Ovary (tissue), 10 donors: ENCODE measurements at regions of chr17 and their contacts with region 1.

Region 1: DNA sequence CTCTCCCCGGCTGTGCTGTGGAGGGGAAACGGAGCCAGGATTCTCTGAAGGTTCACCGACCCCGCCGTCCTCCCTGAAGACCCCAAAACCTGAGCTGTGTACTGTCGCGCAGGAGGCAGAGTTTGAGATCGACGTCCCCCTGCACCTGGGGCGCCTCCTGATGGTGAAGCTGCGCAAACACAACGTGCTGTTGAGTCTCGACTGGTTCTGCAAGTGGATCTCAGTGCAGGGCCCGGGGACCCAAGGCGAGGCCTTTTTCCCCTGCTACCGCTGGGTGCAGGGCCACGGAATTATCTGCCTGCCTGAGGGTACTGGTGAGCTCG is 62.6 kb upstream of the TEKT1 start:
- DNase-seq: no peak
- H3K4me3 ChIP-seq: no peak overlapping the region
- H3K27ac ChIP-seq: no peak overlapping the region
- H3K4me1 ChIP-seq: no peaks in the 10 kb centered on the region
- H3K27me3 ChIP-seq: no peaks in the 10 kb centered on the region
- CTCF ChIP-seq: no peak
- EP300 ChIP-seq: no peak
- POLR2A ChIP-seq: no peak

Region 2: DNA sequence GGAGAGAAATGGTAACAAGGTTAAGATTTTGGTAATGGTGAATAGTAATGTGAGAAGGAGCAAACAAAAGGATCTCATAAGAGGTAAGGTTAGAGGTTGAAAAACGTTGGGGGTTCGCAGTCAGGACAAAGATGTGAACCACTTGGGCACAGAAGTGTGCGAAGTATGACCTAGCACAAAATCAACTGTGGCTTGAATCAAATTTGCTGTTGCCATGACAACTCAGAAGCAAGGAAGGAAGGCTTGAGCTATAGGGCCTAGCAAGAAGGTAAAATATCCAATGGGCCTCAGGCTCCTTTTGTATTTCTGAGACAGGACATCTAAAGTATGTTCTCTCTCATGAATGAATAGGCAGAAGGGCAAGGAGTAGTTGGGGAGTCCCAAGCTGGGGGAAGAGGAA is 38.1 kb before region 1 on chr17:
- intact Hi-C with region 1: loop called in 1 of 4 experiments (anchors 5 kb)
- DNase-seq: no peak
- H3K4me3 ChIP-seq: no peak overlapping the region
- H3K27ac ChIP-seq: no peak overlapping the region
- H3K4me1 ChIP-seq: no peaks in the 10 kb centered on the region
- H3K27me3 ChIP-seq: no peaks in the 10 kb centered on the region
- CTCF ChIP-seq: no peak
- EP300 ChIP-seq: no peak
- POLR2A ChIP-seq: no peak

Region 3: GRCh38 chr17:7475764-7476422 is 581.7 kb after region 1 on chr17:
- intact Hi-C with region 1: no loop called
- DNase-seq: peak in 1 of 5 donors; percentile 50
- H3K4me3 ChIP-seq: no peak overlapping the region
- H3K27ac ChIP-seq: no peak overlapping the region
- H3K4me1 ChIP-seq: peaks cover 14% of the 10 kb centered on the region
- H3K27me3 ChIP-seq: no peaks in the 10 kb centered on the region
- CTCF ChIP-seq: no peak
- EP300 ChIP-seq: no peak
- POLR2A ChIP-seq: no peak